ENCODE measurements at regions of chr9 and their contacts with region 1.

Region 1: GRCh38 chr9:32378993-32379729 is 5.3 kb upstream of the ACO1 start:
- DNase-seq: peak; percentile 68
- CTCF ChIP-seq: peak; percentile 85

Region 2: GRCh38 chr9:32128546-32128945 is 250.6 kb before region 1 on chr9:
- CTCF ChIA-PET with region 1: no interaction called
- POLR2A ChIA-PET with region 1: no interaction called
- DNase-seq: no peak
- CTCF ChIP-seq: no peak

Region 3: GRCh38 chr9:32395490-32396216 is 16.5 kb after region 1 on chr9:
- CTCF ChIA-PET with region 1: interaction called, 48 read pairs
- POLR2A ChIA-PET with region 1: no interaction called
- DNase-seq: no peak
- CTCF ChIP-seq: no peak

Region 4: DNA sequence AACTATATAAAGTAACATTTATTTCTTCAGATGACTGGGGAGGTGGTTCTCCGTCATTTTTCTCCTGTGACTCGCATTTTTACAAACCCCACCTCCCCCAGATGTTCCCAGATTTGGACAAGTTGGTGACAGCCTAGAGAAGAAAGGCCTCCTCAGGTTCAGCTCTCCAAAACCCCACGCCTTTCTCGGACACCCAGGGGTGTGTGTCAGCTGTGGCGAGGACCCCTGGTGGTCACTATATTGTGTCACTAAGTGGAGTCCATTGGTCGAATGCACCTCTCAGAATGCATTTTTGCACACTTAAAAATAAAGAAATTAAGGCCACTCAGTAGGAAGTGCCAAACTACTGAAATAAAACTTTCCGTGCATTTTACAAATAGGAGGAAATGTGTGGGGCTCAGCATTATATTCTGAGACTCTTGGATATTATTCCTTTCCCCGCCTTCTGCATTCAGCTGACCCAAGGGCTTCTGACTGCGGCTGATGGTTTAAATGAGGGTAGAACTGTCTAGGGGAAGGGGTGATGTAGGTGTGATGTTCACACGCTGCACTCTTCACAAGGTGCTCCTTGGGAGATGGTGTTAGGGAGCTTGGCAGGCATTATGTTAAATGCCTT is 52.9 kb after region 1 on chr9:
- CTCF ChIA-PET with region 1: interaction called, 30 read pairs
- POLR2A ChIA-PET with region 1: no interaction called
- DNase-seq: peak; percentile 18
- CTCF ChIP-seq: peak; percentile 33

Region 5: DNA sequence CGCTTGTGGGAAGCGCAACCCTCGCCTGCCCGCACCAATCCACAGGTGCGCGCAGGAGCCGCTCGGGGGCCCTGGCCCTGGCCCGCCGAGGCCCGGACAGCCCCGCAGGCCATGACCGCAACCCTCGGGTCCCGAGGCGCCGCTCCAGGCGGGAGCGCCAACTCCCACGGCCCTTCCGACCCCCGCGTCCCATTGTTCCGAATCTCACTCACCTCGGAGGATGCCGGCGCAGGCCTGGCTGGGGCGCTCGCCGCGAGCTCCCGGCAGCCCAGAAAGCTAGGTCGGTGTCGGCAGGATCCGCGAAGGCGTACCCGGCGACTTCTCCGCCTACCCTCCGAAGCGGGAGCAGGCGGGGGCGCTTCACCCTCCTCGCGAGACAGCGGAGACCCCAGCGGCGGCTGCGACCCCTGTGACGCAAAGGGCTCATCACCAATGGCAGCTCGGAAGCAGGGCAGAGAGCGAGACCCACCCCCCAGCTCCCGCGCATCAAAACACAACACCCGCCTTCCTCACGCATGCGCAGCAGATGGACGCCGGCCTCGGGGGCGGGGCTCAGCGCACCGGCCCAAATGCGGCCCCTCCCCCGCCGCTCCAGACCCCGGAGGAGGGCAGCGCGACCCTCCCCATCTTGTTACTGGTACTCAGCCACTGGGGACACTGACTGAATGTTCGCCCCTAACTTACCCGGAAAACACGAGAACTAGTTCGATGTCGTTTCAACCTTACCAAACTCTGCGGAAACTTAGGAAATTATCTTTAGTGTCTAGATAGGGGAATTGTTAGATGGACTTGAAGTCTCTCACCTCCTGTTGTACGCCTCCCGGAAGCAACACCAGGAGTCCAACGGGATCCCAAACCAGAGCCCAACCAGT is 171.6 kb after region 1 on chr9:
- CTCF ChIA-PET with region 1: interaction called, 45 read pairs
- POLR2A ChIA-PET with region 1: no interaction called
- DNase-seq: peak; percentile 98
- CTCF ChIP-seq: no peak

Region 6: GRCh38 chr9:32571969-32572899 is 193.1 kb after region 1 on chr9:
- CTCF ChIA-PET with region 1: interaction called, 872 read pairs
- POLR2A ChIA-PET with region 1: no interaction called
- DNase-seq: peak; percentile 78
- CTCF ChIP-seq: peak; percentile 65

Region 7: GRCh38 chr9:32968101-32969011 is 589.2 kb after region 1 on chr9:
- CTCF ChIA-PET with region 1: interaction called, 176 read pairs
- POLR2A ChIA-PET with region 1: no interaction called
- DNase-seq: peak; percentile 56
- CTCF ChIP-seq: peak; percentile 68